ENCODE measurements at regions of chr3 and their contacts with region 1.

Region 1: DNA sequence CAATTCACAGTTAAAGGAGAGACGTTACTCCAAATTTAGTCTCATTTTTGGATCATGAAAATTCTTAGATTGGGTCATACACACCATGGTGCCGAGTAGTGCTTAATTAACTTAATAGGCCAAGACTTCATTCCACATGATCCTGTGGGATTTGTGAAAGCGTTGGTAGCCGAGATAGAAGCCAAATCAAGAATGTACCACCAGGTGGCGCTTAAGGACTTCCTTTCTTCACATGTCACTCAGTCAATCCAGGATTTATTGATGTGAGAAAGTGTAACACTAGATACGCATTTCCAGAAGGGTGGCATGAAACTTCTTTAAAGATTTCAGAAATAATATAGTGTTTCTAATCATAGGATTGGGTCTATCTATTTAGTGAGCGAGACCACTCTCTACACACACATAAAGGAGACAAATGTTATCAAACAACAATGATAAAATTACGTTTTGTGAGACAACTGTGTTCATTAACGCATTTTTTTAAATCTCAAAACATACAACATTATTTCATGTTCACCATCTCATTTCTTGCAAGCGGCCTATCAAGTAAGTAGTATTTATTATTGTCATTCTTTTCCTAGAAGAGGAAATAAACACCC is 436.1 kb downstream of the CHL1 start:
- DNase-seq: no peak
- ATAC-seq: peak; percentile 79
- H3K4me3 ChIP-seq: no peak overlapping the region
- H3K27ac ChIP-seq: no peak overlapping the region
- H3K4me1 ChIP-seq: no peaks in the 10 kb centered on the region
- H3K27me3 ChIP-seq: no peaks in the 10 kb centered on the region
- CTCF ChIP-seq: peak; percentile 63 to 77 (median 68)
- EP300 ChIP-seq: no peak
- POLR2A ChIP-seq: no peak
- RAD21 ChIP-seq: peak; percentile 75

Region 2: DNA sequence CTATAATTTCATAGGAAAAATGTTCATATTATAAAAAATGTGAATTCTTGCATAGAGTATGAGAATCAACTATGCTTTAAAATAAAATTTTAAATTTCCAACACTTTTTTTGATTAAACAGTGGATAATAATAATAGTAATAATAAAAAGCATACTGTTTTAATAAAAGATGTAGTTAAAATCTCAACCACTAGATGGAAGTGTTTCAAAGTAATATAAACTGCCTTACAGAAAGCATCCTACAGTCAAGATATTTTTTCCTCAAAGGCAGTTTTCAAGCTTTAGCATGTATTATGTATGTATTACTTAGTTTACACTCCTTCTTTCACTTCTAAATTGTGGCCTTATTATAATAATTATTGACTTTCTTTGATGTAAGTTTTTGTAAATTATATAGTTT is 218.6 kb before region 1 on chr3:
- CTCF ChIA-PET with region 1: interaction called, 3 read pairs
- POLR2A ChIA-PET with region 1: no interaction called
- RAD21 ChIA-PET with region 1: interaction called, 3 read pairs
- SMC1A ChIA-PET with region 1: no interaction called
- in situ Hi-C with region 1: no loop called
- intact Hi-C with region 1: loop called (anchors 1 kb)
- DNase-seq: no peak
- ATAC-seq: peak; percentile 48; the same call in 2 of the 3 replicates
- H3K4me3 ChIP-seq: no peak overlapping the region
- H3K27ac ChIP-seq: no peak overlapping the region
- H3K4me1 ChIP-seq: no peaks in the 10 kb centered on the region
- H3K27me3 ChIP-seq: no peaks in the 10 kb centered on the region
- CTCF ChIP-seq: peak in 2 of 3 experiments; percentile 14 to 16; a peak in 3 of 6 replicates
- EP300 ChIP-seq: no peak
- POLR2A ChIP-seq: no peak
- RAD21 ChIP-seq: 0 out of 2 replicates have a peak, but pooled peaks have one; percentile 23

Region 3: DNA sequence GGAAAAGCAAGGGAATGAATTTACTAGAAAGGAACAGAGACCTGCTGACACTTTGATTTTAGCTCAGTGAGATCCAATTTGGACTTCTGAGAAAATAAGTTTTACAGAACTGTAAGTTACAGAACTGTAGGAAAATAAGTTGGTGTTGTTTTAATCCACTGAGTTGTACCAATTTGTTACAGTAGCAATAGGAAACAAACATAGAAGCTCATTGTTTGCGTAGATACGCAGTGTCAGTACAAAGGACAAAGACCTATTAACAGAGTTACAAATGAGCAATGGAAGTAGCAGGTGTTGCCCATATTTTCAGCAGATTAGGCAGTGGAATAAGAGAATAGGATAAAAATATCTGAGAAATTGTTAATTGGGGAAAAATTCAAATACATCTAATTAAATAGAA is 74.4 kb after region 1 on chr3:
- CTCF ChIA-PET with region 1: no interaction called
- POLR2A ChIA-PET with region 1: no interaction called
- RAD21 ChIA-PET with region 1: no interaction called
- SMC1A ChIA-PET with region 1: no interaction called
- in situ Hi-C with region 1: no loop called
- intact Hi-C with region 1: no loop called
- DNase-seq: no peak
- ATAC-seq: no peak
- H3K4me3 ChIP-seq: no peak overlapping the region
- H3K27ac ChIP-seq: no peak overlapping the region
- H3K4me1 ChIP-seq: no peaks in the 10 kb centered on the region
- H3K27me3 ChIP-seq: no peaks in the 10 kb centered on the region
- CTCF ChIP-seq: no peak
- EP300 ChIP-seq: no peak
- POLR2A ChIP-seq: no peak
- RAD21 ChIP-seq: no peak

Region 4: DNA sequence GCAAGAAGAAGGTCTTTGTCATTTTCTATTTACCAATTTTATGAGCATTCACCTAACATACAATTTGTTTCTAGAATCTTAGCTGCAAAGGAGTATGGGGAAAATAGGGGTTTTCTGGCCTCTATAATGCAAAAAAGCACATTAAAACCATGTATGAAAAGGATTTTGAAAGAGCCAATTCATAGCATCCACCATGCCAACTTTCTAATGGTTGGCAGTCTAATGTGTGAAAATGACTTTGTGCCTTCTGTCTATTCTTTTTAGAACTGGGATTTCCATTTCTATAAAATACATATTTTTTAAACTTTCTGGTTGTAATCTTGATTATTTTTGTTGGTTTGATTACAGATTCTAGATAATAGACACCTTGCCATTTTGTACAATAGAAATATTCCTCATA is 126.4 kb after region 1 on chr3:
- CTCF ChIA-PET with region 1: no interaction called
- POLR2A ChIA-PET with region 1: no interaction called
- RAD21 ChIA-PET with region 1: no interaction called
- SMC1A ChIA-PET with region 1: no interaction called
- in situ Hi-C with region 1: no loop called
- intact Hi-C with region 1: no loop called
- DNase-seq: no peak
- ATAC-seq: no peak
- H3K4me3 ChIP-seq: no peak overlapping the region
- H3K27ac ChIP-seq: no peak overlapping the region
- H3K4me1 ChIP-seq: no peaks in the 10 kb centered on the region
- H3K27me3 ChIP-seq: no peaks in the 10 kb centered on the region
- CTCF ChIP-seq: no peak
- EP300 ChIP-seq: no peak
- POLR2A ChIP-seq: no peak
- RAD21 ChIP-seq: no peak

Measured in GM12878 (cell line).